ENCODE measurements at regions of chr19 and their contacts with region 1.

Region 1: GRCh38 chr19:7366701-7367420 is 18.1 kb downstream of the ARHGEF18 start:
- DNase-seq: peak; percentile 50
- ATAC-seq: peak; percentile 78
- H3K4me3 Mint-ChIP-seq: no peak overlapping the region
- H3K27ac Mint-ChIP-seq: peak overlapping the region; percentile 52
- H3K4me1 Mint-ChIP-seq: peaks cover 4% of the 10 kb centered on the region
- H3K27me3 Mint-ChIP-seq: no peaks in the 10 kb centered on the region

Region 2: GRCh38 chr19:7382694-7383093 is 15.8 kb after region 1 on chr19:
- CTCF ChIA-PET with region 1: interaction called, 21 read pairs
- DNase-seq: no peak
- ATAC-seq: no peak
- H3K4me3 Mint-ChIP-seq: no peak overlapping the region
- H3K27ac Mint-ChIP-seq: no peak overlapping the region
- H3K4me1 Mint-ChIP-seq: peaks cover 10% of the 10 kb centered on the region
- H3K27me3 Mint-ChIP-seq: no peaks in the 10 kb centered on the region

Region 3: DNA sequence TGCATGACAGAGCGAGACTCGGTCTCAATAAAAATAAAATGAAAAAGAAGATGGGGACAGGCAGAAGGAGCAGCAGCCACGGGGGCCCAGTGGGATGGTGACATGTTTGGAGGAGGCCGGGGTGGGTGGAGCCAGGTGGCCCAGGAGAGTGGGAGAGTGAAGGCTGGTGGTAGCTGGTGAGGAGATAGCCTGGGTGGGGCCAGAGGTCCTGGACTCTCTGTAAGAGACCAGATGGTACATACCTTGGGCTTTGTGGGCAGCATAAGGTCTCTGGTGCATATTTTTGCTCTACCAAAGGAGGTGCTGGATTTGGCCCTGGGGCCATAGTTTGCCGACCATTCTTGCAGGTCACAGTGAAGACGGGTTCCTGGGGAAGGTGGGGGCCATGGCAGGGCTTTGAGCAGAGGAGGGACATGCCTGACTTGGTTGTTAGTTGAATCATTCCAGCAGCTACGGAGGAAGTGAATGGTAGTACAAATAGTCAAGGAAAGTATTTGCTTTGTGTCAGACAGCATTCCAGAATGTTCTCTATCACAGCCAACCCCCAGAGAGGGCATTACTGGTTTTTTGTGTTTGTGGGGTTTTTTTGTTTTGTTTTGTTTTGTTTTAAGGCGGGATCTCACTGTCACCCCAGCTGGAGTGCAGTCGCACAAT is 50.9 kb after region 1 on chr19:
- CTCF ChIA-PET with region 1: no interaction called
- DNase-seq: no peak
- ATAC-seq: no peak
- H3K4me3 Mint-ChIP-seq: no peak overlapping the region
- H3K27ac Mint-ChIP-seq: peak overlapping the region; percentile 40
- H3K4me1 Mint-ChIP-seq: peaks cover 7% of the 10 kb centered on the region
- H3K27me3 Mint-ChIP-seq: no peaks in the 10 kb centered on the region

Measured in activated CD8-positive, alpha-beta memory T cell treated with anti-CD3 and anti-CD28 coated beads, Interleukin-2, amount 10 ng/mL, durations not matched to agents 7 days and 5 days (primary cell).